HAP-1 (cell line): ENCODE measurements at regions of chr3 and their contacts with region 1.

Region 1: DNA sequence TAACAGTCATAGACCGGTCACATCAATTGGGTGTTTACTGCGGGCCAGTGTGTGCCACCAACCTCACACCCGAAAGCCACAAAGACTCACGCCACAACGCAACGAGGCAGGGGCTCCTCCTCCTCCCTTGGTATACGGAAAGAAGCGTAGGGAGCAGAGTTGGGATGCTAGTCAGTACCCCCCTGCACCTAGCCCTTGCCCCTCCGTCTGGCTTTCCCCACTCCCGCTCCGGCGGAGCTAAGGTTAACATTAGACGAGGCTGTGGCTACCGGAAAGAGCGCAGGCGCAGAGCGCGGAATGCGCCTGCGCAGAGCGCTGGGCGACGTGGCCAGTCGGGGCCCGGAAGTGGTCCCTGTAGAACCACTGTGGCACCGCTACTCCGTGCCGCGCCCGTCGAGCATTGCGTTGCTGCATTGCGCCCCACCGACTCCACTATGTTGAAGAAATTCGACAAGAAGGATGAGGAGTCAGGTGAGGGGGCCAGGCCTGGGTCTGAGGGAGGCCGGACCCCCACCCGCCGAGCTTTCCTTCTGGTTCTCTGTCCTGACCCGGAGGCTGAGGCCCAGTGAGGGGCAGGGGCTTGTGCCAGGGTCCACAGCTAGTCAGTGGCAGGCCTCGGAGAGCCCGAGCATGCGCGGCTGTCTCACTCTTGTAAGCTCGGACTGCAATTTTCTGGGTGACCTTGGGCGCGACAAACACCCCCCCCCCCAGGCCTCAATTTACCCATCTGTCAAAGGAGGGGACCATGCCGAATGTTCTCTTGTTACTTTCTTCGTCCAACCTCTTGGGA is at the start of gene COPG1:
- DNase-seq: peak; percentile 80 to 89
- H3K4me3 ChIP-seq: peak within 1 kb of the TSS; percentile 94
- H3K4me1 ChIP-seq: peaks cover 3% of the 10 kb centered on the region
- H3K27me3 ChIP-seq: no peaks in the 10 kb centered on the region

Region 2: GRCh38 chr3:128969993-128970739 is 279.3 kb before region 1 on chr3:
- in situ Hi-C with region 1: loop called (anchors 5 kb)
- DNase-seq: peak; percentile 41 to 74
- H3K4me3 ChIP-seq: no peak overlapping the region
- H3K4me1 ChIP-seq: no peaks in the 10 kb centered on the region
- H3K27me3 ChIP-seq: no peaks in the 10 kb centered on the region

Region 3: DNA sequence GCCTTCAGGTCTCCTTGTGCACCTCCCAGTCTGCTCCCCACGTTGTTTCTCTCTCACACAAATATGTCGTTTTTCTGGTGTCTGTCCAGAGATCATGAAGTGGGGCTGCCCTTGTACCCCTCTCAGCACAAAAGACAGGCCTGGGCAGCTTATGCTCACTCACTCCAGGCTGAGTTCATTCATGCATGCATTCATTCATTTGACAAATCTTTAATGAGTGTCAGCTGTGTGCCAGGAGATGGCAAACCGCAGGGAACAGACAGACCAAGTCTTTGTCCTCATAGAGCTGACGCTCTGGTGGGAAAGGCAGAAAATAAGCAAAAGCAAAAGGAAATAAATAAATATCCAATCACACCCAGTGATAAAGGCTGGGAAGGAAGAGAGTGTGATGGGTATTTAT is 717.4 kb after region 1 on chr3:
- in situ Hi-C with region 1: no loop called
- DNase-seq: no peak
- H3K4me3 ChIP-seq: no peak overlapping the region
- H3K4me1 ChIP-seq: no peaks in the 10 kb centered on the region
- H3K27me3 ChIP-seq: no peaks in the 10 kb centered on the region